Sigmoid colon (tissue), 7 donors: ENCODE measurements at regions of chr18 and their contacts with region 1.

Region 1: GRCh38 chr18:34592961-34593382 is 117.1 kb upstream of the DTNA start:
- DNase-seq: peak; percentile 74
- H3K4me3 ChIP-seq: peak overlapping the region; percentile 28 to 46 (median 43)
- H3K27ac ChIP-seq: peak overlapping the region; percentile 77 to 83 (median 82)
- H3K4me1 ChIP-seq: peaks cover 0 to 38% (median 29%) of the 10 kb centered on the region in 4 donors
- H3K27me3 ChIP-seq: no peaks in the 10 kb centered on the region
- CTCF ChIP-seq: no peak
- EP300 ChIP-seq: peak in 1 of 4 donors; percentile 52
- POLR2A ChIP-seq: peak in 1 of 2 donors; percentile 20

Region 2: GRCh38 chr18:34493099-34493544 is 99.8 kb before region 1 on chr18:
- intact Hi-C with region 1: loop called (anchors 5 kb)
- DNase-seq: peak; percentile 84
- H3K4me3 ChIP-seq: peak overlapping the region; percentile 43 to 73 (median 60)
- H3K27ac ChIP-seq: peak overlapping the region; percentile 79 to 85 (median 81)
- H3K4me1 ChIP-seq: peaks cover 0 to 12% (median 2%) of the 10 kb centered on the region in 4 donors
- H3K27me3 ChIP-seq: no peaks in the 10 kb centered on the region
- CTCF ChIP-seq: no peak
- EP300 ChIP-seq: peak in 1 of 4 donors; percentile 34
- POLR2A ChIP-seq: no peak

Region 3: DNA sequence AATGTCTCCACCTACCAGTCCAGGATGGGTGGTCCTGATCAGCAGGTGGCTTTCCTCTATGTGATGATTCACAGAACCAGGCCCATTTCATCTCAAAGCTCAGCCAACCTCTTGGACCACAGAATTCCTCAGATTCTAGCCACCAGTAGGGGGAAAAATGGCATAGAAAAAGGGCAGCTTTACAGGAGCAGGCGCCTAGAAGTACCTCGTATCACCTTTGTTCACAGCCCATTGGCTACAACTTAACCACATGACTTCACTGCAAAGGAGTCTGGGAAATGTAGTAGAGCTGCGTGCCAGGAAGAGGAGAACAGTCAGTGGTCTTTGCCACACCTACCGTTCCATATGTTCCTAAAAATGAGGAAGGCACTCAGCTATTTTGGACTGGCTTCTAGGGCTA is 54.3 kb after region 1 on chr18:
- intact Hi-C with region 1: no loop called
- DNase-seq: no peak
- H3K4me3 ChIP-seq: no peak overlapping the region
- H3K27ac ChIP-seq: peak overlapping the region in 1 of 4 donors; percentile 66
- H3K4me1 ChIP-seq: peaks cover 0 to 59% (median 43%) of the 10 kb centered on the region in 4 donors
- H3K27me3 ChIP-seq: no peaks in the 10 kb centered on the region
- CTCF ChIP-seq: no peak
- EP300 ChIP-seq: no peak
- POLR2A ChIP-seq: no peak

Region 4: GRCh38 chr18:34661464-34662111 is 68.6 kb after region 1 on chr18:
- intact Hi-C with region 1: loop called (anchors 5 kb)
- DNase-seq: no peak
- H3K4me3 ChIP-seq: no peak overlapping the region
- H3K27ac ChIP-seq: peak overlapping the region in 3 of 4 donors; percentile 75 to 82 (median 82)
- H3K4me1 ChIP-seq: peaks cover 0 to 40% (median 27%) of the 10 kb centered on the region in 4 donors
- H3K27me3 ChIP-seq: no peaks in the 10 kb centered on the region
- CTCF ChIP-seq: peak in 3 of 4 experiments; percentile 65 to 83 (median 77)
- EP300 ChIP-seq: no peak
- POLR2A ChIP-seq: no peak

Region 5: DNA sequence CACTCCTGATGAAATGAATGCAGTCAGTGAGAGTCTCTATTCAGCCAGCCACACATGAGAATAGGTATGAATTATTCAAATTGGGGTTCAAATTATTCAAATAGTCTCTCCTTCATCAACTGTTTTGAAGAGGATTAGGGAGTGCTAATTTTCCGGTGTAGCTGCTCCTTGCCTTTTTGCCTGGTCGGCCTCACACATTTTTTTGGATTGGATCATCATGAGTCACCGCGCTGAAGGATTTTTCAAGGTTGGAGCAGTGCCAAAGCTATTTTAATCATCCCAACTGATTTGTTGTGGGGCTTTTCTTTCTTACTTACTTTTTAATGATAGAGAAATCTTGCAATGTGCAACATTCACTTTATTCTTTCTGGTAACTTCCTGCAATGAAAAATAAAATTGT is 114.7 kb after region 1 on chr18:
- intact Hi-C with region 1: loop called (anchors 5 kb)
- DNase-seq: peak; percentile 81
- H3K4me3 ChIP-seq: no peak overlapping the region
- H3K27ac ChIP-seq: peak overlapping the region; percentile 74 to 88 (median 79)
- H3K4me1 ChIP-seq: peaks cover 0 to 58% (median 49%) of the 10 kb centered on the region in 4 donors
- H3K27me3 ChIP-seq: no peaks in the 10 kb centered on the region
- CTCF ChIP-seq: no peak
- EP300 ChIP-seq: no peak
- POLR2A ChIP-seq: no peak

Region 6: DNA sequence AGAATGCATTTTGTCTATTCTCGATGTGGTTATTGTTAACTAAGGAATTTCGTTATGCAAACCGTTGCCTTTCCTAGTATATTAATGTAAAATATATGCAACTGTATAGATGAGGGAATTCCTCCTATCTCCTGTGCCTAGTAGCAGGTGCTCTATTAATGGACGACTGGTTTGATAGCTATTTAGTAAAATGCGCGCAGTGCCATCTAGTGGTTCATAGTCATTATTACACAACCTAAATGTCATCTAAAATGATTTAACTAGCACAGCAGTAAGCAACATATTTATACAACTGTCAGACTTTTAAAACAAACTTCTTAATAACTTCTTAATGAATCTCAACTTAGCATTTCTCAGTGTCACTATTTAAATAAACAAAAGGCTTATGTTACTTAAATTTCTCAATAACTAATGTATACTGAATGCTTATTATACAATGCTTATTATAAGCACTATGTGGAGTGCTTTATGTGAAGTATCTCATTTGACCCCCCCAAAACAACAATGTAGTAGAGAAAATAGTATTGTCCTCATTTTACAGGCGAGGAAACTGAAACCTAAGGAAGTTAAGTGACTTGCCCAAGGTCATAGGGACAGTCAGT is 195.1 kb after region 1 on chr18:
- intact Hi-C with region 1: loop called (anchors 2 kb)
- DNase-seq: no peak
- H3K4me3 ChIP-seq: no peak overlapping the region
- H3K27ac ChIP-seq: no peak overlapping the region
- H3K4me1 ChIP-seq: peaks cover 0 to 9% (median 2%) of the 10 kb centered on the region in 4 donors
- H3K27me3 ChIP-seq: no peaks in the 10 kb centered on the region
- CTCF ChIP-seq: peak; percentile 36 to 71 (median 66)
- EP300 ChIP-seq: no peak
- POLR2A ChIP-seq: no peak

Region 7: DNA sequence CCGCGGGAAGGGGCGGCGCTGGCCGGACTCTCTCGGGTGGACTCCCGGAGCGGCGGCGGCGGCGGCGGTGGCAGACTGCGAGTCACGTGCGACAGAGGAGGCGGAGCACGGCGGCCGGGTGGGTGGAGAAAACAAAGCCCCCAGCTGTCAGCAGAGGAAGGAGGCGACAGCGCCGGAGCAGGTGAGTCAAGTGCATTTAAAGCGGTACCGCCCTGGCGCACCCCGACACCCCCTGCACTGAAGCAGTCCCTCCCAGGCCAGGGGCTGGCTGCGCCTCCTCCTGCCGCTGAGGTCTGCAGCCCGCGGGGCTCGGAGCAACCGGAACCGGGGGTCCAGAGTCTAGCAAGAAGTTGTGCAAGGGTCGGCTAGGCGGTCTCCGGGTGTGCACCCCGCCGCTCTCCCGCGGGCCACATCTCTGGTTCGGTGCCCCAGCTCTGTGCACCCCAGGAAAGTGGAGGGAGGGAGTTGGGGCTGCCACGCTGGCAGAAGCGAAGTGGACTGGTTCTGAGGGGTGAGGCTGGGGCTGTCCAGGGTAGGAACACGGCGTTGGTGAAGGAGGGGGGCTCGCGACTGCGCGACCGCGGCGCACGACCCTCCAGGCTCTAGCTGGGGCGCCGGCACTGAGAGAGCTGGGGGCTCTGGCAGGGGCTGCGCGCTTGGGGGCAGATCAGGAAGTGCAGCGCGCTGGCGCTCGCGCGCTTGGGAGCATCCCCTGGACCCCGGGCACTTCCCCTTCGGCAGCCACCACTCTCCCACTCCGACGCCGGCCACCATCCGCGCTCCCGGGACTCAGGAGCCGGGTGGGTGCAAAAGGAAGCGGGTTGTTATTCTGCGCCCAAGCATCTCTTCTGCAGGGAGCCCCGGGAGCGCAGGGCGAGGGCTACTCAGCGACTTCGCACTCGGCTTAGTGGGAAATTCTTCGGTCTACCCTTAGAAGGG is 384.2 kb after region 1 on chr18:
- intact Hi-C with region 1: no loop called
- DNase-seq: peak; percentile 86
- H3K4me3 ChIP-seq: peak overlapping the region; percentile 55 to 83 (median 71)
- H3K27ac ChIP-seq: peak overlapping the region; percentile 16 to 79 (median 74)
- H3K4me1 ChIP-seq: peaks cover 0 to 23% (median 15%) of the 10 kb centered on the region in 4 donors
- H3K27me3 ChIP-seq: no peaks in the 10 kb centered on the region
- CTCF ChIP-seq: no peak
- EP300 ChIP-seq: no peak
- POLR2A ChIP-seq: peak in 1 of 2 donors; percentile 23

Region 8: DNA sequence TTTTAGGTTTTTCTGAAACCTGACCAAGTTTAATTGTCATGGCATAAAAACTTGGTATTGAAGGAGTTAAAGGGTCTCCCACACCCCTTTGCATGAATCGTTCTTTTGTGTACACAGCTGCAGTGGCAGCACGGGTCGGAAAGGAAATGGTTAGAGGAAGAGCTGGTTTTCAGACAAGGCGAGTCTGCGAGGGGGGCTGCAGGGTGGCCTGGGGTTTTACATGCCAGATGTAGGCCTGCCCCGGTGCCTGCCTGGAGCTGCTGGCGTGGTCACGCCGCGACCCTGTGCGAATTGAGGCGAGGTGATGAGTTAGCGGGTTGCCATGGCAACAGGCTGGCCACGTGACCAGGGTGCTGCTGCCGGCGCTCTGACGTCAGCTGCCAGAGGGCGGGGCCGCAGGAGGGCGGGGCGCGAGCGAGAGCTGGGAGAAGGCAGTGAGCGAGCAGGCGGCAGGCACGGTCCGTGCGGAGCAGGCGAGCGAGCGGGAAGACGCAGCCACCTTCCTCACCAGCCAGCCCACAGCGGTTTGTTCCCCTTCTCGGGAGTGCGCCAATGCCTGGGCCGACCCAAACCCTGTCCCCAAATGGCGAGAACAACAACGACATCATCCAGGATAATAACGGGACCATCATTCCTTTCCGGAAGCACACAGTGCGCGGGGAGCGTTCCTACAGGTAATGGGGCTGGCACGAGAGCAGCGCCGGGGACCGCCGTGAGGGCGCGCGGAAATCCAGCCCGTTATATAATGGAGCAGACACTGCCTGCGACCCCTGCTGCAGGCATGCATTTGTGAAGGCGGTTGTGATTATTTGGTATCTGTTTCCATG is 448.2 kb after region 1 on chr18 and contains the start of gene MAPRE2:
- intact Hi-C with region 1: loop called (anchors 5 kb)
- DNase-seq: peak; percentile 99
- H3K4me3 ChIP-seq: peak within 1 kb of the TSS; percentile 62 to 89 (median 82)
- H3K27ac ChIP-seq: peak within 1 kb of the TSS; percentile 80 to 89 (median 85)
- H3K4me1 ChIP-seq: peaks cover 0 to 40% (median 31%) of the 10 kb centered on the region in 4 donors
- H3K27me3 ChIP-seq: no peaks in the 10 kb centered on the region
- CTCF ChIP-seq: no peak
- EP300 ChIP-seq: peak in 1 of 4 donors; percentile 88
- POLR2A ChIP-seq: peak; percentile 79 to 92
- total RNA-seq, gene MAPRE2: 14.0 to 31.6 (median 27.9) TPM

Region 9: GRCh38 chr18:35050028-35050546 is 457.1 kb after region 1 on chr18:
- intact Hi-C with region 1: loop called (anchors 5 kb)
- DNase-seq: no peak
- H3K4me3 ChIP-seq: peak overlapping the region in 2 of 4 donors; percentile 1 to 13
- H3K27ac ChIP-seq: peak overlapping the region; percentile 36 to 72 (median 60)
- H3K4me1 ChIP-seq: peaks cover 0 to 49% (median 27%) of the 10 kb centered on the region in 4 donors
- H3K27me3 ChIP-seq: no peaks in the 10 kb centered on the region
- CTCF ChIP-seq: no peak
- EP300 ChIP-seq: no peak
- POLR2A ChIP-seq: no peak

Region 10: GRCh38 chr18:35407871-35408481 is 815.0 kb after region 1 on chr18:
- intact Hi-C with region 1: no loop called
- DNase-seq: no peak
- H3K4me3 ChIP-seq: no peak overlapping the region
- H3K27ac ChIP-seq: no peak overlapping the region
- H3K4me1 ChIP-seq: peaks cover 0 to 4% (median 1%) of the 10 kb centered on the region in 4 donors
- H3K27me3 ChIP-seq: no peaks in the 10 kb centered on the region
- CTCF ChIP-seq: peak in 3 of 4 experiments; percentile 43 to 72 (median 57)
- EP300 ChIP-seq: no peak
- POLR2A ChIP-seq: no peak